Activated CD8-positive, alpha-beta T cell treated with anti-CD3 and anti-CD28 coated beads, Interleukin-2, amount 10 ng/mL, durations not matched to agents 7 days and 5 days (primary cell): ENCODE measurements at regions of chr7 and their contacts with region 1.

Region 1: DNA sequence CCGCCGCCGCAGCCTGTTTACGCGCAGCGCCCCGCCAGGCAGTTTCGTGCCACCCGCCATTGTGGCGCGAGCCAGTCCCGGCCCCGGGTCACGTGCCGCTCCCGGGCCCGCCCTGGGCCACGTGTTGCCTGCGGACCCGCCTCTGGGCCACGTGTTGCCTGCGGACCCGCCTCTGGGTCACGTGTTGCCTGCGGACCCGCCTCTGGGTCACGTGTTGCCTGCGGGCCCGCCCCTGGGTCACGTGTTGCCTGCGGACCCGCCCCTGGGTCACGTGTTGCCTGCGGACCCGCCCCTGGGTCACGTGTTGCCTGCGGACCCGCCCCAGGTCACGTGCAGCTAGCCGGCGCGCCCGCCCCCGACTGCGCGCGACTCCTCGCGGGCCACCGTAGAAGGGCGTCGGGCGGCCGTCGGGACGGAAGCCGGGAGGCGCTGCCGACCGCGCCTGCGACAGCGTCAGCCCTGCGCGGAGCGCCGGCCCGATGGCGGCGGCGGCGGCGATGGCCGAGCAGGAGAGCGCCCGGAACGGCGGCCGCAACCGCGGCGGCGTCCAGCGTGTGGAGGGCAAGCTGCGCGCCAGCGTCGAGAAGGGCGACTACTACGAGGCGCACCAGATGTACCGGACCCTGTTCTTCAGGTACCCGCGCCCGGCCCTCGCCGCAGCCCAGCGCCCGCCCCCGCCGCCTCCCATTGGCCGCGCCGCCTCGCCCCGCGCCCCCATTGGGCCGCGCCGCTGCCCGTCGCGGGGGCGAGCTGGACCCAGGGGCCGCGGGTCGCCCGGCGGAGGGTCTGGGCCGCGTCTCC is at the start of gene GET4:
- DNase-seq: peak; percentile 97
- ATAC-seq: peak; percentile 89
- H3K4me3 Mint-ChIP-seq: peak within 1 kb of the TSS; percentile 88
- H3K27ac Mint-ChIP-seq: peak within 1 kb of the TSS; percentile 90
- H3K4me1 Mint-ChIP-seq: peaks cover 32% of the 10 kb centered on the region
- H3K27me3 Mint-ChIP-seq: no peaks in the 10 kb centered on the region
- total RNA-seq, gene GET4: 32.2 to 38.3 TPM

Region 2: DNA sequence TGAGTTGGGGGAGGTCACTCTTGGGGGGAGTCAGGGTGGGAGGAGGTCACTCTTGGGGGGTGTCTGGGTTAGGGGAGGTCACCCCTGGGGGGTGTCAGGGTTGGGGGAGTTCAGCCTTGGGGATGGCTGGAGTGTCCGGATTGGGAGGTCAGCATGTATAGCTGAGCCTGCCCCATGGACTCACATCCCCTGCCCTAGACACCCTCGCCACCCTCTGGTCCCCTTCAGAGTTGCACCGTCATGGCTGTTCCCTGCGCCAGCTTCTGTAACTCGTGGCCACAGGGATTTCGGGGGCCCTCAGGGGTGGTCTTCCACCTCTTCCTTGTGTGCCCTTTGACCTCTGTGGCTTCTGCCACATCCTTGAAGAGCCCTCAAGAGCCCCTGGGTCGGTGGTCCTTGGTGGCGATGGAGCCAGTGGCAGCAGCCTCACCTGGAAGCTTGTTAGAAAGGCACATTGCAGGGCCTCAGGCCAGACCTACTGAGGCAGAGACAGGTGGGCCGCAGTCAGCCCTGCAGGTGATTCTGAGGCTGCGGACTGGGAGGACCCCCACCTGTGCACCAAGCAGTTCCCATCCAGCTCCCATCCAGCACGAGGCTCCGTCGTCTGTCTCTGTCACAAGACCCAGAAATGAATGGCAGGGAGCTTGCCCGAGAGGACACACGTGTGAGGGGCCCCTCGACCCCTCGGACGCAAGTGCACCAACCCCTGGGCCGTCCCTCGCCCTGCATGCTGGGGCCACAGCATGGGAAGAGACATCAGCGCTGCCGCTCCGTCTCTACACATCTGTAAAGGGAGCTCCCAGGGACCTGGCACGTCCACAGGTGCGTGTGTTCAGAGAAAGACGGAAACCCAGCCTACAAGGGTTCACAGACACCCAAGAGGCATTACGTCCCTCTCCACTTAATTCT is 88.8 kb before region 1 on chr7:
- CTCF ChIA-PET with region 1: interaction called, 33 read pairs
- POLR2A ChIA-PET with region 1: no interaction called
- DNase-seq: no peak
- ATAC-seq: no peak
- H3K4me3 Mint-ChIP-seq: no peak overlapping the region
- H3K27ac Mint-ChIP-seq: no peak overlapping the region
- H3K4me1 Mint-ChIP-seq: peaks cover 5% of the 10 kb centered on the region
- H3K27me3 Mint-ChIP-seq: no peaks in the 10 kb centered on the region

Region 3: GRCh38 chr7:816300-816750 is 60.0 kb before region 1 on chr7:
- CTCF ChIA-PET with region 1: interaction called, 24 read pairs
- POLR2A ChIA-PET with region 1: interaction called, 3 read pairs
- DNase-seq: peak; percentile 97
- ATAC-seq: peak; percentile 98
- H3K4me3 Mint-ChIP-seq: peak overlapping the region; percentile 57
- H3K27ac Mint-ChIP-seq: no peak overlapping the region
- H3K4me1 Mint-ChIP-seq: peaks cover 46% of the 10 kb centered on the region
- H3K27me3 Mint-ChIP-seq: peaks cover 29% of the 10 kb centered on the region

Region 4: GRCh38 chr7:831596-832166 is 44.7 kb before region 1 on chr7:
- CTCF ChIA-PET with region 1: interaction called, 13 read pairs
- POLR2A ChIA-PET with region 1: interaction called, 4 read pairs
- DNase-seq: peak; percentile 30
- ATAC-seq: peak; percentile 51
- H3K4me3 Mint-ChIP-seq: peak overlapping the region; percentile 48
- H3K27ac Mint-ChIP-seq: peak overlapping the region; percentile 82
- H3K4me1 Mint-ChIP-seq: peaks cover 44% of the 10 kb centered on the region
- H3K27me3 Mint-ChIP-seq: no peaks in the 10 kb centered on the region